Transverse colon (tissue), 4 donors: ENCODE measurements at regions of chr4 and their contacts with region 1.

Region 1: GRCh38 chr4:144894573-144894972 is 203.4 kb downstream of the ANAPC10 start:
- DNase-seq: peak; percentile 10
- H3K4me3 ChIP-seq: no peak overlapping the region
- H3K27ac ChIP-seq: no peak overlapping the region
- H3K4me1 ChIP-seq: no peaks in the 10 kb centered on the region
- H3K27me3 ChIP-seq: no peaks in the 10 kb centered on the region
- CTCF ChIP-seq: no peak
- EP300 ChIP-seq: no peak
- POLR2A ChIP-seq: no peak

Region 2: GRCh38 chr4:144915772-144916171 is 21.2 kb after region 1 on chr4:
- in situ Hi-C with region 1: no loop called
- intact Hi-C with region 1: loop called (anchors 1 kb)
- DNase-seq: no peak
- H3K4me3 ChIP-seq: no peak overlapping the region
- H3K27ac ChIP-seq: no peak overlapping the region
- H3K4me1 ChIP-seq: no peaks in the 10 kb centered on the region
- H3K27me3 ChIP-seq: no peaks in the 10 kb centered on the region
- CTCF ChIP-seq: no peak
- EP300 ChIP-seq: no peak
- POLR2A ChIP-seq: no peak

Region 3: GRCh38 chr4:145414841-145415240 is 520.3 kb after region 1 on chr4:
- in situ Hi-C with region 1: no loop called
- intact Hi-C with region 1: no loop called
- DNase-seq: no peak
- H3K4me3 ChIP-seq: no peak overlapping the region
- H3K27ac ChIP-seq: no peak overlapping the region
- H3K4me1 ChIP-seq: no peaks in the 10 kb centered on the region
- H3K27me3 ChIP-seq: no peaks in the 10 kb centered on the region
- CTCF ChIP-seq: no peak
- EP300 ChIP-seq: no peak
- POLR2A ChIP-seq: no peak